ENCODE measurements at regions of chr1 and their contacts with region 1.

Region 1: DNA sequence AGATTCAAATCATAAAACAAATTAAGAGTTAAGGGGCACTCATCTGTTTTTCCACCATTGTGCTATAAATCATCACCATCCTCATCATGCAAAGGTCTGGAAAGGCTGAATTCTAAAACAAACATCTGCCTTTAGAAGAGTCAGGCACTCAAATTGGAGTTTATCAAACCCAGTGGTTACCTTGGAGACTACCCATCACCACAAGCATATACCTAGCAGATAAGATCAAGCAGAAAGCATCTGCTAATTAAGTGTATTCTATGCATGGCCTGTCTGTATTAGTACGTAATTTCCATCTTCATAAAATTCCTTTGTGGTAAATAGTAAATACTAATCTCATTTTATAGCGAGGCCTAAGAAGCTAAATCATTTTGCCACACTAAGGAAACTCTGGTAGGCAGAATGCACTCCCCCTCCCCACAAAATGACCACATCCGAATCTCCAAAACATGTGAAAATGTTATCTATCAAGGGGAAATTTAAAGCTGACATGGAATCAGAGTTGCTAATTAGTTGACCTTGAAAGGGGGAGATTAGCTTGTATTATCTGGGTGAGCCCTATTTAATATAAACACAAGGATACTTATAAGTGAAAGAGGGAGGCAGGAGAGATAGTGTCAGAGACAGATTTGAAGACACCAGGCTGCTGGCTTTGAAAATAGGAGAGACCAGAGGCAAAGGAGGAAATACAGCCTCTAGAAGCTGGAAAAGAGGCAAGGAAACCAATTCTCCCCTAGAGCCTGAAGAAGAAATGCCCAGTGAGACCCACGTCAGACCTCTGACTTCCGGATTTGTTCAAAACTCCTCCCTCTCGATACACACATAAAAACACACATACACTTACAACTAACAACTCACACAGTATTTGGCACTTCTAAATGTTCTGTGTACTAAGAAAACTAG is 23.2 kb downstream of the ARID4B start:
- DNase-seq: no peak
- ATAC-seq: peak; percentile 15; the same call in 1 of the 3 replicates
- H3K4me3 ChIP-seq: no peak overlapping the region
- H3K27ac ChIP-seq: peak overlapping the region; percentile 52; the same call in 1 of the 3 replicates
- H3K4me1 ChIP-seq: no peaks in the 10 kb centered on the region; a peak in 2 of 5 replicates
- H3K27me3 ChIP-seq: no peaks in the 10 kb centered on the region
- CTCF ChIP-seq: no peak
- EP300 ChIP-seq: no peak
- POLR2A ChIP-seq: no peak
- RAD21 ChIP-seq: no peak

Region 2: DNA sequence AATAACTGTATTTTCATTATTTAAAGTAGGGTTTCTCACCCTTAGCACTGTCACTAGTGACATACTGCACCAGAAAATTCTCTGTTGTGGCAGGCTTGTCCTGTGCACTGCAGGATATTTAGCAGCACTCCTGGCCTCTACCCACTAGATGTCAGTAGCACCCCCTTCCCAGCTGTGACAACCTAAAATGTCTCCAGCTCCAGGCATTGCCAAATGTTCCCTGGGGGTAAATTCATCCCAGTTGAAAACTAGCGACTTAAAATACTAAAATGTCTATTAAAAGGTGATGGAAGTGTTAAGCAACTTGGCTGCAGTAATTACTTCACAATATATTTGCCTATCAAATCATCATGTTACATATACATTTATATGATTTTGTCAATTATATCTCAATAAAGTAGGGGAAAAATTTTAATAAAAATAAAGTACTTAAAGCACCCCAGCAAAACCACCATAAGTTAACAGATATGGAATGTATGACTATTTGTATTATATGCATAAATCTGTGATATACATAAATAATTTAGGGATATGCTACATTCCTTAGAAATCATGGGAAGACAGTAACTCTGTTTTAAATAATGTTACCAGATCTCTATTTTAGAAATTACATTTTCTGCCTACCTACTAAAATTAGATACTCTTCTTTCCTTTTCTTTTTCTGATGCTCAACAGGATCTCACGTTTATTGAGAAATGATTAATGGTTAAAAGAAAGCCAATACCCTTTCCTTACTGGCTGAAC is 51.4 kb before region 1 on chr1:
- CTCF ChIA-PET with region 1: no interaction called
- POLR2A ChIA-PET with region 1: no interaction called
- in situ Hi-C with region 1: no loop called
- intact Hi-C with region 1: no loop called
- DNase-seq: peak; percentile 23 to 83 (median 44)
- ATAC-seq: peak; percentile 100
- H3K4me3 ChIP-seq: no peak overlapping the region
- H3K27ac ChIP-seq: no peak overlapping the region
- H3K4me1 ChIP-seq: no peaks in the 10 kb centered on the region
- H3K27me3 ChIP-seq: no peaks in the 10 kb centered on the region
- CTCF ChIP-seq: peak; percentile 92 to 96 (median 93)
- EP300 ChIP-seq: no peak
- POLR2A ChIP-seq: no peak
- RAD21 ChIP-seq: peak; percentile 90 to 96

Region 3: DNA sequence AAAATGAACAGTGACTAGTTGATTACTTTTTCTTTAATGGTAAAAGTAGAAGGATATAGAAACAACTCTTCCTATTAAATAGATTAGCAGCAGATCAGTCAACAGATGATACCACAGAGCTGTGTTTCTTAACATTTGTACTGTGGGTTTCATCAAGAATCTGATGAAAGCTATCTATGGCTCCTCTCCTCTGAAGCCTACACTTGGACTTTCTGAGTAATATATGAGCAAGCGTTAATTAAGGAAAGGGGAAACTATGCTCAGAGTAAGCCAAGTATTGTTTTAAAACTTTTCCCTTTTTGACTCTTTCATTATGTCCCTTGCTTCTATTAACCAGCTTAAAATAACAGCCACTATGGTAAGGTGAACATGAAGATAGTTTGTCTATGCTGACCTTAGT is 12.4 kb after region 1 on chr1:
- CTCF ChIA-PET with region 1: no interaction called
- POLR2A ChIA-PET with region 1: interaction called, 15 read pairs
- in situ Hi-C with region 1: no loop called
- intact Hi-C with region 1: no loop called
- DNase-seq: no peak
- ATAC-seq: peak; percentile 11; the same call in 1 of the 3 replicates
- H3K4me3 ChIP-seq: no peak overlapping the region
- H3K27ac ChIP-seq: no peak overlapping the region
- H3K4me1 ChIP-seq: peaks cover 3 to 4% of the 10 kb centered on the region in 2 experiments; a peak in 3 of 5 replicates
- H3K27me3 ChIP-seq: no peaks in the 10 kb centered on the region
- CTCF ChIP-seq: no peak
- EP300 ChIP-seq: no peak
- POLR2A ChIP-seq: no peak
- RAD21 ChIP-seq: no peak